Panc1 (cell line): ENCODE measurements at regions of chr18 and their contacts with region 1.

Region 1: GRCh38 chr18:26226229-26227005 is at the start of gene TAF4B:
- DNase-seq: peak; percentile 62
- ATAC-seq: peak; percentile 95
- H3K4me3 ChIP-seq: peak within 1 kb of the TSS; percentile 76 to 83
- H3K27ac ChIP-seq: peak within 1 kb of the TSS; percentile 80
- H3K4me1 ChIP-seq: peaks cover 11% of the 10 kb centered on the region
- H3K27me3 ChIP-seq: no peaks in the 10 kb centered on the region
- CTCF ChIP-seq: no peak
- total RNA-seq, gene TAF4B: 8.0 TPM

Region 2: GRCh38 chr18:26215247-26215970 is 11.0 kb before region 1 on chr18:
- CTCF ChIA-PET with region 1: no interaction called
- POLR2A ChIA-PET with region 1: interaction called, 10 read pairs
- in situ Hi-C with region 1: no loop called
- intact Hi-C with region 1: no loop called
- DNase-seq: no peak
- ATAC-seq: no peak
- H3K4me3 ChIP-seq: no peak overlapping the region
- H3K27ac ChIP-seq: no peak overlapping the region
- H3K4me1 ChIP-seq: no peaks in the 10 kb centered on the region
- H3K27me3 ChIP-seq: no peaks in the 10 kb centered on the region
- CTCF ChIP-seq: no peak